H1 (cell line): ENCODE measurements at regions of chr5 and their contacts with region 1.

Region 1: DNA sequence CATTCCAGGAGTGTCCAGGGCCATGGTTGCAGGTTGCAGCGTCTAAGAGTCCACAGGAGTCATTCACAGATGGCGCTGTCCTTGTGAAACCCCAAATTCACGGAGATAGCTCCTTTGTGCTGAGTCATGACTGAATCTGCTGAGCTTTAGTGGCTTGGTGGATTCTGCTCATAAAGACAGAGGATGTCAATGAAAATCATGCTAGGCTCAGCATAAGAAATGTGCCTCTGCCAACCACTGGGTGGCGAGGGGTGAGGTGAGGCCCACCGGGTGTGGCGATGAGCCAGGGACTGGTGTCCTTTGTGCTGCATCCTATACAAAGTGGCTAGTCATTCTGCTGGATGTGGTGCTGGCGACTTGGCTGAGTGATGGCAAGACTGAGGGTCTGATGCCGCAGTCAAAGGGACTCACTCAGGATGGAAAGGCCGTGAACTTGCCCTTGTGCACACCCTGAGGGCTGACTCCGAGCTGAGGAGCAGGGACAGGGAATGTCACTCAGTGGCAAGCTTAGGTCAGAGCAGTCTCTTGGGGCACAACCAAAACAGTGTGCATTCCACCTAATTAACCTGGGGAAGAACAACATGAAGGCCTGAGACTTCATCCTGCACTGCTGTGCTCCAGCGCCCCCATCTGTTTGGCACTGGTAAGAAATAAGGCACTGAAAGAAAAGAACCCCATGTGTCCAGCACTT is 71.5 kb downstream of the DAP start:
- DNase-seq: peak in 1 of 2 experiments; percentile 87
- H3K4me3 ChIP-seq: no peak overlapping the region
- H3K27ac ChIP-seq: peak overlapping the region; percentile 32; the same call in 1 of the 2 replicates
- H3K4me1 ChIP-seq: peaks cover 0 to 14% (median 5%) of the 10 kb centered on the region in 4 experiments; a peak in 6 of 7 replicates
- H3K27me3 ChIP-seq: no peaks in the 10 kb centered on the region
- CTCF ChIP-seq: peak; percentile 73 to 91 (median 83)
- EP300 ChIP-seq: no peak
- POLR2A ChIP-seq: no peak
- RAD21 ChIP-seq: peak; percentile 90 to 93

Region 2: DNA sequence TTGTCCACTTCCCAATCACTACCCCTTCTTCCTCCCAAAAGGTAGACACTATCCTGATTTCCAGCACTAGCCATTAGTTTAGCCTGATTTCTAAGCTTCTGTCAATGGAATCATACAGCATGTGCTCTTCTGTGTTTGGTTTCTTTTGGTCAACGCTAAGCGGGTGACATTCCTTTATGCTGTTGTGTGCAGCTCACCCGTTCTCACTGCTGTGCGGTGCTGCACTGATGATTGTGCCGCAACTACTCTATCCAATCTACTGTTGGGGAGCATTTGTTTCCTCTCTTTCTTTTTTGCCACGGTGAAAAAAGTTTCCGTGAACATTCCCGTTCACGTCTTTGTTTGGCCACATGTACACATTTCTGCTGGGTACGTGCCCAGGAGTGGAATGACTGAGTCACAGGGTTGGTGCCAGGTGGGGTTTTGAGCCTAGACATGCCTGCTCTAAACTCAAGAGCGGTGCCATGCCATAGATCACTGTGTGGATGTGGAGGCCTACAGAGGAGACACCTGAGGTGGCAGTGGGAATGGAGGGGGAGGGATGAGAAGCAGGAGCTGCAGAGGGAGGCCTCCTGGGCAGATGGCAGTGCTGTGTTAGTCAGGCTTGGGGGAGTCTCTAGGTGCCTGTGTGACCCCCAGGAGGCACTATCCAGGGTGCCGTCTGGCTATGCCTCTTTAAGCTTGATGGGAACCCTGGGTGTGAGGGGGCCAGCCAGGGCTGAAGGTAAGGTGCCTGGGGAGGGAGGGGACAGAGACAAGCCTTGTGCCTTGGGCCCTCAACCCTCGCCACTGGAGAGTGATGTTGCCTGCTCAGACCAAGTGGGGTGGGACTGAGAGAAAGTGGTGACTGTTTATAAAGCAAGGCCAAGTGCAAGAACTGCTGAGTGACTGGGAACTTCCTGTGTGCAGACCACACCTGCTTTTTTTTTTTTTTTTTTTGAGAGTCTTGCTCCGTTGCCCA is 137.1 kb before region 1 on chr5:
- CTCF ChIA-PET with region 1: interaction called, 12 read pairs
- POLR2A ChIA-PET with region 1: no interaction called
- DNase-seq: no peak
- H3K4me3 ChIP-seq: no peak overlapping the region
- H3K27ac ChIP-seq: peak overlapping the region; percentile 58; the same call in 1 of the 2 replicates
- H3K4me1 ChIP-seq: peaks cover 9 to 28% (median 11%) of the 10 kb centered on the region in 4 experiments
- H3K27me3 ChIP-seq: no peaks in the 10 kb centered on the region; a peak in 1 of 7 replicates
- CTCF ChIP-seq: no peak
- EP300 ChIP-seq: no peak
- POLR2A ChIP-seq: no peak
- RAD21 ChIP-seq: no peak

Region 3: GRCh38 chr5:10635257-10635866 is 54.2 kb before region 1 on chr5:
- CTCF ChIA-PET with region 1: interaction called, 38 read pairs
- POLR2A ChIA-PET with region 1: no interaction called
- DNase-seq: peak in 1 of 2 experiments; percentile 49
- H3K4me3 ChIP-seq: no peak overlapping the region
- H3K27ac ChIP-seq: no peak overlapping the region
- H3K4me1 ChIP-seq: peaks cover 18 to 50% (median 36%) of the 10 kb centered on the region in 4 experiments
- H3K27me3 ChIP-seq: no peaks in the 10 kb centered on the region
- CTCF ChIP-seq: no peak
- EP300 ChIP-seq: no peak
- POLR2A ChIP-seq: no peak
- RAD21 ChIP-seq: no peak

Region 4: GRCh38 chr5:10653043-10653442 is 36.5 kb before region 1 on chr5:
- CTCF ChIA-PET with region 1: interaction called, 12 read pairs
- POLR2A ChIA-PET with region 1: no interaction called
- DNase-seq: no peak
- H3K4me3 ChIP-seq: no peak overlapping the region
- H3K27ac ChIP-seq: no peak overlapping the region
- H3K4me1 ChIP-seq: peaks cover 2 to 13% (median 6%) of the 10 kb centered on the region in 4 experiments
- H3K27me3 ChIP-seq: no peaks in the 10 kb centered on the region
- CTCF ChIP-seq: no peak
- EP300 ChIP-seq: no peak
- POLR2A ChIP-seq: no peak
- RAD21 ChIP-seq: no peak

Region 5: DNA sequence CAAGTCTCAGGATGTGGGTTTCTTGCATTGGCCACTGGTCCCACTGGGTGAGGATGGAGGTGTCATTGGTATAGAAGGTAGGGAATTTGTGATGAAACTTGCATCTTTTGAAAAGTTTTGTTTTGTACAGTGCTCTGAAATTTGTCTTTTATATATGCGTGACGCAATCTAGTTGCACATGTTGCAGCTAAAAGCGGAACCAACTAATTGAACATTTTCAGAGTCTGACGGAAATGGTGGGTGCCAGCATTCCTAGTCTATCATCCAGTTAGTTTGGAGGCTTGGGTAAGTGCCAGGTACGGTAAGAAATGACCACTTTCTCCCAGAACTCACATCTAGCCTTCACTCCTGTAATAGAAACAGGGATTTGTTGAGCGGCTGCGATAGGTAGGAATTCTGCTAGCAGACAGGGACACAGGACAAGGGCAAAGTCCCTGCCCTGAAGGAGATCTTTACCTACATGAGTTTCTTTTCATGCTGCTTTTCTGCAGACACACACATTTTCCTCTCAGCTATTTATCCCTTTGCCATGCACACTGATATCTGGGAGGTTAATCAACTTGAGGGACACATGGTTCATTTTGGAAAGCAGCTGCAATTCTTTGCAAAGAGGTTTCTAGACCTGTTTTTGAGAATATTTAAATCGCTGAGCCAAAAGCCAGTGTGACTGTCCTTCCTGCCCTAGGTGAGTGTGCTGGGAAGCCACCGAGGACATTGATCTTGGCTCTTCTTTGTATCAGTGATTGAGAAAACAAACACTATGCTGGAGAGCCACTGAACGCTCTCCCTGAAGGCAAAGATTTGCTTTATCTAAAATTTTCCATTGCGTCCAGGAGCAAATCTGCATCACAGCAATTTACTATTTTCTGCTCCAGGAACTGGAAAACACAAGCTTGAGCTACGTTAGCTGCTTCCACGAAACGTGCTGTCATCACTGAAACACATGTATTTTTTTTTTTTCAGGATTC is 18.2 kb before region 1 on chr5:
- CTCF ChIA-PET with region 1: interaction called, 22 read pairs
- POLR2A ChIA-PET with region 1: no interaction called
- DNase-seq: no peak
- H3K4me3 ChIP-seq: no peak overlapping the region
- H3K27ac ChIP-seq: no peak overlapping the region
- H3K4me1 ChIP-seq: no peaks in the 10 kb centered on the region
- H3K27me3 ChIP-seq: no peaks in the 10 kb centered on the region
- CTCF ChIP-seq: no peak
- EP300 ChIP-seq: no peak
- POLR2A ChIP-seq: no peak
- RAD21 ChIP-seq: no peak

Region 6: DNA sequence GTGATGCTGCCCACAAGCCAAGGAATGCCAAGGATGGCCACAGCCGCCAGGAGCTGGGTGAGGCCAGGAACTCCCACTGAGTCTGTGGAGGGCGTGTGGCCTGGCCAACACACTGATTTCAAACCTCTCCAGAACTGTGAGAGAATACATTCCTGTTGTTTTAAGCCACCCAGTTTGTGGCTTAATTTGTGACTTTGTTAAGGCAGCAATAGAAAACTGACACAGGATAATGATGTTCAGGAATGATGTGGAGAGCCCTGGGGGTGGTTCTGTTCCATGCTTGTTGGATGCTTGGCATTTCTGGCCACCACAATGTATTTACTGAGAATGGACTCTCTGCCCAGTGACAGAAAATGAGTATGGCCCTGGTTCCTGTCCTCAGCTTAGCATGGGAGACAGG is 11.3 kb before region 1 on chr5:
- CTCF ChIA-PET with region 1: interaction called, 40 read pairs
- POLR2A ChIA-PET with region 1: no interaction called
- DNase-seq: no peak
- H3K4me3 ChIP-seq: no peak overlapping the region
- H3K27ac ChIP-seq: no peak overlapping the region
- H3K4me1 ChIP-seq: no peaks in the 10 kb centered on the region
- H3K27me3 ChIP-seq: no peaks in the 10 kb centered on the region
- CTCF ChIP-seq: no peak
- EP300 ChIP-seq: no peak
- POLR2A ChIP-seq: no peak
- RAD21 ChIP-seq: no peak